IMR-90 (cell line): ENCODE measurements at regions of chr19 and their contacts with region 1.

Region 1: DNA sequence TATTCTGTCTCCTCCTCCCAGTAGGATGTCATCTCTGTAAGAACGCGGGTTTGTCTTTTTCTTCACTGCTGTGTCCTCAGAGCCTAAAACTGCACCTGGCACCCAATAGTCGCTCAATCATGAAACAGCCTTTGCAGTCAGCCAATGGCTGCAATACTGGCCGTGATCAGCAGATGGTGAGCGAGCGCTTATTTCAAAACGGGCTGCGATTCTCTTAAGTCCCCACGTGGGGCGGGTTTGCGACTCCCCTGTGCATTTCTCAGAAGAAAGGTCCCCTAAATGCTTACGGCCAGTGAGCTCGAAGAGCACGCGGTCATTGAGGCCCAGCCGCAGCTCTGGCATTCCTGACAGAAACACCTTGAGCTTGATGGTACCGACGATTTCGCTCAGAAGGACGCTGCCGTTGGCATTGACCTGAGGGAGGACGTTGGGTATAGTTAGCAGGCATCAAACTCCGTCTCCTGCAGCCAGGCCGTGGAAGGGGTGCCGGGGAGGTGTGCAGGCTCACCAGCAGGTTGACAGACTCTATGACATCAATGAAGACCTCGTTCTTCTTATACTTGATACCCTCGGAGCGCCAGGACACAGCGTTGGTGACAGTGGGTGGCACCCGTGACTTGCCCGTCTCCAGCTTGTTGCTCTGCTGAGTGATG is 6.0 kb downstream of the AP1M2 start:
- DNase-seq: peak; percentile 90
- ATAC-seq: peak; percentile 99
- H3K4me3 ChIP-seq: no peak overlapping the region
- H3K27ac ChIP-seq: no peak overlapping the region
- H3K4me1 ChIP-seq: peaks cover 1% of the 10 kb centered on the region; the same call in 1 of the 2 replicates
- H3K27me3 ChIP-seq: peaks cover 1% of the 10 kb centered on the region
- CTCF ChIP-seq: peak; percentile 99
- POLR2A ChIP-seq: peak; percentile 48; the same call in 1 of the 2 replicates
- RAD21 ChIP-seq: peak; percentile 99

Region 2: DNA sequence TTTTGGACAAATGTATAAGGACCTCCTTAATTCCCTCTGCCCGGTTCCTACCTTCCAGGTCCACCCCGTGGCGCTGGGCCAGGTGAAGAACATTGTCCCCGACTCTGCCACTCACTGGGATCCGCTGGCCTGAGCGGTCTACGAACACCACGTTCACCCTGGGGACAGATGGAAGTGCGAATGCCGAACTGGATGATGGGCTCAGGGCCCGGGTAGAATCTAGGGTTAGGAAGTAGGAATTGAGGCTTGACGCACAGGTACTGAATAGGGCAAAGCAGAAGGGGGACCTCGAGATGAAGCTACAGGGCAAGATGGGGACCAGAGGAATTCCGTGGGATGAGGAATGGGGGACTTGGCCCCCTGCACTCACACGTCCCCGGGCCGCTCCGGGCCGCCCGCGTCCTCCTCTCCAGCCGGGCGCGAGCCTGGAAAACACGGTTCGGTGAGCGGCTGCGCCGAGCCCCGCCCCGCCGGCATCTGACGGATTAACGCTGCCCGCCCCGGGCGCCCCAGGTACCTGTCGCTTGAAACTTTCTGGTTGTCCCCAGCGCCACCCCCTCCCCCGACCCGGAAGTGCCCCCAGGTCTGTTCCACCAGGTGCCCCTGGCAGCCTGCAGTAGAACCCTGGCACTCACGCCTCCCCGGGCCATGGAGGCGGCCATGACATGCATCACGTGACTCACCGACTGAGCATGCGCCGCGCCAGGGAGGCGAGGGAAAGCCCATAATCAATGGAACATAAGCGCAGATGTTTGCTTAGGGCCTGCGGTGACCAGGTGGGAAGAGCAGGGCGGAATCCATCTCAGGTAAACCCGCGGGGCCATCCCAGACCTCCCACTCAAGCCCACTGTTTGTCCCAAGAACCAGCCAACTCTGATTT is 265.5 kb before region 1 on chr19 and contains the start of gene FDX2:
- CTCF ChIA-PET with region 1: no interaction called
- POLR2A ChIA-PET with region 1: no interaction called
- dilution Hi-C with region 1: no loop called
- in situ Hi-C with region 1: no loop called
- intact Hi-C with region 1: no loop called
- DNase-seq: peak; percentile 67
- ATAC-seq: peak; percentile 93
- H3K4me3 ChIP-seq: peak within 1 kb of the TSS; percentile 58
- H3K27ac ChIP-seq: peak within 1 kb of the TSS; percentile 45
- H3K4me1 ChIP-seq: no peaks in the 10 kb centered on the region
- H3K27me3 ChIP-seq: no peaks in the 10 kb centered on the region
- CTCF ChIP-seq: no peak
- POLR2A ChIP-seq: no peak
- RAD21 ChIP-seq: no peak
- total RNA-seq, gene FDX2: 39.8 and 40.8 TPM in 2 replicates

Region 3: DNA sequence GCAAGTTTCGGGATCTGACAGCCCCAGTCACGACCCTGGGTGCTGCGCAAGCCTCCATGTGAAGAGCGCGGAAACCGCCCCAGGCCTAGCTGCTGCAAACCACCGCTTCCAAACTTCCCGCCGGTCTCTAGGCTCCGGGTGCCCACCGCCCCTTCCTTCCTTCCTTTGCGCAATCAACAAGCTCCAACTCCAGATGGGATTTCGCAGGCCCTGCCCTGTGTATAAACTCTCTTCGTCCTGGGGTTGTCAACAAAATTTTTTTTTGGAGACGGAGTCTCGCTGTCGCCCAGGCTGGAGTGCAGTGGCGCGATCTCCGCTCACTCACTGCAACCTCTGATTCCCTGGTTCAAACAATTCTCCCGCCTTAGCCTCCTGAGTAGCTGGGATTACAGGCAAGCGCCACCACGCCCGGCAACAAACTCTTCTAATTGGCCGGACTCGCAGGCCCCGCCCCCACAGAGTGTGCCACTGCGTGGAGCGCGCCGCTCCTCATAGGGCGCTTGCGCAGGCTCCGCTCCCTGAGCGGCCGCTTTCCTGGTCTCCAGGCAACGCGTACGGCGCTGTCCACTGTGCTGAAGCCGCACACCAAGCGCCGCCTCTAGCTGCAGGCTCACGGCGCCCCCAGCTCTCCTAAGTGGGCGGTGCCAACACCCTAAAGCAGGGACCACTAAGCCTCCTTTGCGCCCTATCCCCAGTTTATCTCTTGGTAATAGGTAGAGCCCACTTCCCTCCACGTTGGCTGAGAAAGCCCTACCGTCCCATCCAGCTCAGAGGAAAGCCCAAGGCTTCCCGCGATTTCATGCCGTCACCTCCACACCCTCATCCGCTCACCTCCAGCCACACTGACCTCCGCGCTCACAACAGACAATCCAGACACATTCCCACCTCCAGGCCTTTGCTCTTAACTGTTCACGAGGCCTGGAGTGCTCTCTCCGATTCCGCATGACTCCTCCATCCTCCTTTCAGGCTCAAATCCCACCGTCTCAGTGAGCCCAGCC is 114.6 kb after region 1 on chr19:
- CTCF ChIA-PET with region 1: interaction called, 7 read pairs
- POLR2A ChIA-PET with region 1: no interaction called
- dilution Hi-C with region 1: no loop called
- in situ Hi-C with region 1: no loop called
- intact Hi-C with region 1: loop called (anchors 1 kb)
- DNase-seq: peak; percentile 91
- ATAC-seq: peak; percentile 99
- H3K4me3 ChIP-seq: no peak overlapping the region
- H3K27ac ChIP-seq: no peak overlapping the region
- H3K4me1 ChIP-seq: no peaks in the 10 kb centered on the region
- H3K27me3 ChIP-seq: no peaks in the 10 kb centered on the region
- CTCF ChIP-seq: 0 out of 2 replicates have a peak, but pooled peaks have one; percentile 4
- POLR2A ChIP-seq: no peak
- RAD21 ChIP-seq: no peak

Region 4: GRCh38 chr19:10701955-10702525 is 120.9 kb after region 1 on chr19:
- CTCF ChIA-PET with region 1: interaction called, 7 read pairs
- POLR2A ChIA-PET with region 1: interaction called, 10 read pairs
- dilution Hi-C with region 1: no loop called
- in situ Hi-C with region 1: no loop called
- intact Hi-C with region 1: loop called (anchors 1 kb)
- DNase-seq: no peak
- ATAC-seq: peak; percentile 19
- H3K4me3 ChIP-seq: peak overlapping the region; percentile 83
- H3K27ac ChIP-seq: peak overlapping the region; percentile 76
- H3K4me1 ChIP-seq: peaks cover 3% of the 10 kb centered on the region
- H3K27me3 ChIP-seq: no peaks in the 10 kb centered on the region
- CTCF ChIP-seq: no peak
- POLR2A ChIP-seq: no peak
- RAD21 ChIP-seq: no peak